ENCODE measurements at regions of chr5 and their contacts with region 1.

Region 1: DNA sequence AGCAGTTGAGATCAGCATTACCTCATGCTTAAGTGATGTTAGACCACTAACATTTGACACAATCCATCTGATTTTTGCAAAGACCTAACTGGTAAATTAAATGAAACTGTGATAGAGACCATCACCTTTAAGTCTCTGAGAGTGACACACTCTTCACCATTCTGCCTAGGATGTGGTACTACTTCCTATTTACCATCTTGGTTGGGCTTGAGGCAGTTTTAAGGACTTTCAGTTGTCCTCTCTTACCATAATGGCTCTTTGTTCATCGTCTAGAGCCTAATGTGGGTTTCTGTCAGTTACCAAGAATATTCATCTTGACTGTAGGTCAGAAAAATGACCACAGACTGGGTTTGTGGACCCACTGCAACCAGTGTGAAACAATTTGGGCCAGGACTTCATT is 158.1 kb downstream of the CETN3 start:
- DNase-seq: no peak
- H3K4me3 ChIP-seq: no peak overlapping the region
- H3K27ac ChIP-seq: no peak overlapping the region
- H3K27me3 ChIP-seq: no peaks in the 10 kb centered on the region
- CTCF ChIP-seq: no peak

Region 2: GRCh38 chr5:90264689-90265544 is 13.5 kb after region 1 on chr5:
- CTCF ChIA-PET with region 1: interaction called, 11 read pairs
- POLR2A ChIA-PET with region 1: no interaction called
- DNase-seq: peak; percentile 33
- H3K4me3 ChIP-seq: no peak overlapping the region
- H3K27ac ChIP-seq: no peak overlapping the region
- H3K27me3 ChIP-seq: no peaks in the 10 kb centered on the region
- CTCF ChIP-seq: peak; percentile 99

Region 3: GRCh38 chr5:90326995-90327394 is 75.5 kb after region 1 on chr5:
- CTCF ChIA-PET with region 1: no interaction called
- POLR2A ChIA-PET with region 1: no interaction called
- DNase-seq: no peak
- H3K4me3 ChIP-seq: no peak overlapping the region
- H3K27ac ChIP-seq: no peak overlapping the region
- H3K27me3 ChIP-seq: no peaks in the 10 kb centered on the region
- CTCF ChIP-seq: no peak

Measured in AG04450 (cell line).